Activated CD8-positive, alpha-beta T cell treated with anti-CD3 and anti-CD28 coated beads for 36 hours (primary cell): ENCODE measurements at regions of chr17 and their contacts with region 1.

Region 1: GRCh38 chr17:75515496-75516254 is at the start of gene CASKIN2:
- DNase-seq: peak; percentile 89
- ATAC-seq: peak; percentile 71
- H3K4me3 Mint-ChIP-seq: peak within 1 kb of the TSS; percentile 74
- H3K27ac Mint-ChIP-seq: no peak within 1 kb of the TSS
- H3K4me1 Mint-ChIP-seq: peaks cover 28% of the 10 kb centered on the region
- H3K27me3 Mint-ChIP-seq: no peaks in the 10 kb centered on the region
- CTCF ChIP-seq: peak; percentile 98
- total RNA-seq, gene CASKIN2: 2.2 to 2.5 TPM

Region 2: DNA sequence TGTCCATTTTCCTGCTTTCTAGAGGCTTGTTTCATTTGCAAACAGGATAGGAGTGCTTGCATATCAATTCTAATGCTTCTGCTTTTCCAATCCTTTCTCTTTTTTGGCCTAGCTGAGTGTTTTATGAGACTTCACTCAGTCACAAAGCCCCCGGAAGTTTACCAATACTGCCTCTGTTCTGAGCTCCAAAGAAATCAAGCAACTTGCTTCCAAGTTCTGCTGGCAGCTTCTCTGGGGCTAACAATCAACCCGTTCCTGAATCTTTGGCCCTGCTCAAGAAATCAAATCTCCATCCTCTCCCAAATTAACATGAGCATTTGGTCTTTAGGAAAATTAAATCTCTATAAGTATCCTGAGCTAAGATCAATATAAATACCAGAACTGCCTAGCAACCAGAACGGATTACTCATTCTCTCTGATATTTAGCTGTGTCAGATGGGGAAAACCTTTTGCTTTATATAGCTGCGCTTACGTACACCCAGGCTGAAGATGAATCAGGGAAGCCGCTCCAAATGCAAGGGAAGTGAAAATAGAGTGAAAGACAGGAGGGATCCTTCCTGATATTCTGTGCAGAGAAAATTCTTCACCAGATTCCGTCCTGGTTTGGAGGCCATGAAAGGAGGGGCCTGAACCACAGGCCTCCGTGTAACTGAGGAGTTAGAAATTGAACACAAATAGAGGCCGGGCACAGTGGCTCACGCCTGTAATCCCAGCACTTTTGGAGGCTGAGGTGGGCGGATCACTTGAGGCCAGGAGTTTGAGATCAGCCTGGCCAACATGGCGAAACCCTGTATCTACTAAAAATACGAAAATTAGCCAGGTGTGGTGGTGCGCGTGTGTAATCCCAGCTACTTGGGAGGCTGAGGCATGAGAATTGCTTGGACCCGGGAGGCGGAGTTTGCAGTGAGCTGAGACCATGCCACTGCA is 86.9 kb before region 1 on chr17:
- CTCF ChIA-PET with region 1: interaction called, 3 read pairs
- POLR2A ChIA-PET with region 1: no interaction called
- intact Hi-C with region 1: loop called (anchors 5 kb)
- DNase-seq: no peak
- ATAC-seq: no peak
- H3K4me3 Mint-ChIP-seq: no peak overlapping the region
- H3K27ac Mint-ChIP-seq: no peak overlapping the region
- H3K4me1 Mint-ChIP-seq: peaks cover 8% of the 10 kb centered on the region
- H3K27me3 Mint-ChIP-seq: no peaks in the 10 kb centered on the region
- CTCF ChIP-seq: no peak

Region 3: GRCh38 chr17:75456417-75457046 is 59.1 kb before region 1 on chr17 and contains the start of gene TMEM94:
- CTCF ChIA-PET with region 1: interaction called, 13 read pairs
- POLR2A ChIA-PET with region 1: interaction called, 3 read pairs
- intact Hi-C with region 1: no loop called
- DNase-seq: peak; percentile 96
- ATAC-seq: peak; percentile 97
- H3K4me3 Mint-ChIP-seq: peak within 1 kb of the TSS; percentile 89
- H3K27ac Mint-ChIP-seq: peak within 1 kb of the TSS; percentile 85
- H3K4me1 Mint-ChIP-seq: peaks cover 27% of the 10 kb centered on the region
- H3K27me3 Mint-ChIP-seq: no peaks in the 10 kb centered on the region
- CTCF ChIP-seq: no peak
- total RNA-seq, gene TMEM94: 55.3 to 56.4 TPM

Region 4: GRCh38 chr17:75535119-75535537 is 19.5 kb after region 1 on chr17:
- CTCF ChIA-PET with region 1: interaction called, 14 read pairs
- POLR2A ChIA-PET with region 1: interaction called, 4 read pairs
- intact Hi-C with region 1: no loop called
- DNase-seq: peak; percentile 87
- ATAC-seq: peak; percentile 98
- H3K4me3 Mint-ChIP-seq: peak overlapping the region; percentile 53
- H3K27ac Mint-ChIP-seq: peak overlapping the region; percentile 79
- H3K4me1 Mint-ChIP-seq: peaks cover 19% of the 10 kb centered on the region
- H3K27me3 Mint-ChIP-seq: no peaks in the 10 kb centered on the region
- CTCF ChIP-seq: no peak

Region 5: DNA sequence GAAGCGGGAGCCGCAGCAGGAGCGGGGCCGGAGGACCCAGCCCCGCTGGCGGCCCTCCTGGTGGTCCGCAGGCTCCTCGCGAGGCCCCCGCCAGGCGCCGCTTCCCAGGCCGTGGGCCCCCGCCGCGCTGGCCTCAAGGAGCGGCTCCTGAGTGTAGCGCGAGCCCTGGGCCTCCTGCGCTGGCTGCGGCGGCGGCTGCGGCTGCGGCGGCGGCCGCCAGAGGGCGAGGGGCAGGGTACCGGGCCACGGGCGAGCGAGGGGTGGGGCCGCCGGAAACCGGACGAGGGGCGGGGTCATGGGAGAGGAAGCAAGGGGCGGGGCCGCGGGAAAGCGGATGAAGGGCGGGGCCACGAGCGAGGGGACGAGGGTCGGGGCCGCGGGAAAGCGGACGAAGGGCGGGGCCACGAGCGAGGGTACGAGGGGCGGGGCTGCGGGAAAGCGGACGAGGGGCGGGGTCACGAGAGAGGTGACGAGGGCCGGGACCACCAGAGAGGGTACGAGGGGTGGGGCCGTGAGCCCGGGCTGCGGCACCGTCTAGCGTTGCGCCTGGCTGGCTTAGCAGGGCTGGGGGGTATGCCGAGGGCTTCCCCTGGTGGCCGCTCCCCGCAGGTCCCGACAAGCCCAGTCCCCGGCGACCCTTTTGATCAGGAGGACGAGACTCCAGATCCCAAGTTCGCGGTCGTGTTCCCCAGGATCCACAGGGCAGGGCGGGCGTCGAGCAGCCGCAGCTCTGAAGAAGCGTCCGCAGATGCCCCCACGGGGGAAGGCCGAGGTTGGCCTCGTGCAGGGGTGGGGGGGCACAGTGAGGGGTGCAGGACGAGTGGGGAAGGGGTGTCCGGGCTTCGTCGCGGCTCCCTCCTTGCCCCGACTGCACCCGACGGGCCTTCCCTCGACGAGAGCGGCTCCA is 73.6 kb after region 1 on chr17:
- CTCF ChIA-PET with region 1: interaction called, 17 read pairs
- POLR2A ChIA-PET with region 1: interaction called, 12 read pairs
- intact Hi-C with region 1: loop called (anchors 10 kb)
- DNase-seq: peak; percentile 98
- ATAC-seq: peak; percentile 87
- H3K4me3 Mint-ChIP-seq: peak overlapping the region; percentile 70
- H3K27ac Mint-ChIP-seq: peak overlapping the region; percentile 49
- H3K4me1 Mint-ChIP-seq: peaks cover 4% of the 10 kb centered on the region
- H3K27me3 Mint-ChIP-seq: no peaks in the 10 kb centered on the region
- CTCF ChIP-seq: peak; percentile 43